ENCODE measurements at regions of chr5 and their contacts with region 1.

Region 1: GRCh38 chr5:34929150-34929719 is at the start of gene DNAJC21:
- DNase-seq: peak; percentile 98 to 99
- ATAC-seq: peak; percentile 97 to 99 (median 98)
- H3K4me3 ChIP-seq: peak within 1 kb of the TSS; percentile 74 to 97 (median 88)
- H3K27ac ChIP-seq: peak within 1 kb of the TSS; percentile 76 to 97 (median 94)
- H3K4me1 ChIP-seq: peaks cover 4 to 32% (median 20%) of the 10 kb centered on the region in 9 donors
- H3K27me3 ChIP-seq: no peaks in the 10 kb centered on the region
- CTCF ChIP-seq: no peak
- total RNA-seq, gene DNAJC21: 38.4 to 58.9 (median 50.3) TPM

Region 2: DNA sequence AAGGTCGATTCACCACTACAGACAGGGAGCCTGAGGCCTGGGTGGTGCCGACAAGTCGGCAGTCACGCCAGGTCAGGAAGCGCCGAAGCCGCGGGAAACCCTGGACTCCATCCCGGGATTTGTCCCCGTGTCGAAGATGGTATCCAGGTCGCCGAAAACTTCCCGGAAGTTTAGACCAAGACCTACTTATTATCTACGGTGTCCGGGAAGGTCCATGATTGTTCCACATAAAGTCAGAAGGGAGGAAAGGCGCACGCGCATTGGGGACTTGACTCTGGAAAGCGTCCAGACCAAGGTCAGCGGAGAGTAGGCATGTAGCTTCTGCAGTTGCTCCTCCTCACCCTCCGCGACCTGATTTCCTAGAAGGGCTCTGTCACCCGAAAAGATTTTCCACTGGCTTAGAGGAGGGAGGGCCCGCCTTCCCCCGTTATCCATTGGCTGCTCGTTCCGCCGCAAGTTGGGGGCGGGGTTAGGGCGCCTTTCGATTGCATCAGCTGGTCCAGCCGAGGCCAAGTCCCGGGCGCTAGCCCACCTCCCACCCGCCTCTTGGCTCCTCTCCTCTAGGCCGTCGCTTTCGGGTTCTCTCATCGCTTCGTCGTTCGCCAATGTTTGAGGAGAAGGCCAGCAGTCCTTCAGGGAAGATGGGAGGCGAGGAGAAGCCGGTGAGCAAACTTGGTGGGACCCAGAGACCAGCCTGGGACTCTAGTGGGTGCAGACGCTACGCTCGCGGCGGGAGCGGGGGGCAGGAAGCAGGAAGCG is 1488.6 kb before region 1 on chr5 and contains the start of gene TARS1:
- intact Hi-C with region 1: loop called in 2 of 10 experiments (anchors 5 to 10 kb)
- DNase-seq: peak; percentile 95 to 100
- ATAC-seq: peak; percentile 97 to 100 (median 98)
- H3K4me3 ChIP-seq: peak within 1 kb of the TSS; percentile 55 to 88 (median 75)
- H3K27ac ChIP-seq: peak within 1 kb of the TSS; percentile 78 to 95 (median 93)
- H3K4me1 ChIP-seq: peaks cover 0 to 52% (median 50%) of the 10 kb centered on the region in 9 donors
- H3K27me3 ChIP-seq: no peaks in the 10 kb centered on the region
- CTCF ChIP-seq: no peak
- total RNA-seq, gene TARS1: 61.9 to 97.8 (median 74.5) TPM

Region 3: DNA sequence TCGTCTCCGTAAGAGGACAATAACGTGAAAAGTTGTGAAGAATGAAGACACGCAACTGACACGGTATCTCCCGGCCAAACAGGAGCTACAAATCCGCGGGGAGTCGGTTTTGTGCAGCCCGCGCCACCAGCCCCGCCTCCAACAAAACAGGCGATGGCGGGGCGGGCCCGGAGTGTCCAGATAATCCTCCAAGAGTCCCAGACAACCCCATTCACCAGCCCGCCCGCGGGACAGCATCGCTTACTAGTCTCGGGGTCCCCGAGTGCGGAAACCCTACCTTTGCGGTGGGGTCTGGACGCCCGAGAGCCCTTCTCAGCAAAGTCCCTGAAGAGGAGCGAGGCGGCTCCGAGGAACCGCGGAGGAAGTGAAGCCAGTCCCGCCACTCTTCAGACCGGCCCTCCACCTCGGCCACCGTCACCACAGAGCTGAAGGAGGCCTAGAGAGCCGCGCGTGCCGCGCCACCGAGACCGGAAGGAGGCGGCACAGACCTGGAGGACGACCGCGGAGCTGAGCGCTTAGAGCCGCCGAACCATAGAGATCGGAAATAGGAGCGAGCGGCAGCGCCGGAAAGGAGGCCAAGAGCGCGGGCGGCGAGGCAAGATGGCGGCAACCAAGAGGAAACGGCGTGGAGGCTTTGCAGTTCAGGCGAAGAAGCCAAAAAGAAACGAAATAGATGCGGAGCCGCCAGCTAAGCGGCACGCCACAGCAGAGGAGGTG is 13.9 kb before region 1 on chr5 and contains the starts of genes BRIX1 and RAD1:
- intact Hi-C with region 1: loop called in 1 of 10 experiments (anchors 1 kb)
- DNase-seq: peak; percentile 95 to 96
- ATAC-seq: peak; percentile 100
- H3K4me3 ChIP-seq: peak within 1 kb of the TSS; percentile 76 to 97 (median 86)
- H3K27ac ChIP-seq: peak within 1 kb of the TSS; percentile 41 to 93 (median 84)
- H3K4me1 ChIP-seq: peaks cover 3 to 35% (median 27%) of the 10 kb centered on the region in 9 donors
- H3K27me3 ChIP-seq: no peaks in the 10 kb centered on the region
- CTCF ChIP-seq: peak in 6 of 9 donors; percentile 9 to 47 (median 22)
- total RNA-seq, gene BRIX1: 9.5 to 17.2 (median 14.9) TPM
- total RNA-seq, gene RAD1: 18.9 to 27.5 (median 23.9) TPM

Region 4: GRCh38 chr5:35058374-35058788 is 129.1 kb after region 1 on chr5:
- intact Hi-C with region 1: no loop called
- DNase-seq: no peak
- ATAC-seq: no peak
- H3K4me3 ChIP-seq: no peak overlapping the region
- H3K27ac ChIP-seq: no peak overlapping the region
- H3K4me1 ChIP-seq: no peaks in the 10 kb centered on the region
- H3K27me3 ChIP-seq: peaks cover 0 to 9% (median 0%) of the 10 kb centered on the region in 7 donors
- CTCF ChIP-seq: no peak

Measured in heart right ventricle (tissue), 16 donors.